IMR-90 (cell line): ENCODE measurements at regions of chr1 and their contacts with region 1.

Region 1: GRCh38 chr1:192086644-192087043 is 71.6 kb upstream of the RGS18 start:
- DNase-seq: no peak
- ATAC-seq: no peak
- H3K4me3 ChIP-seq: no peak overlapping the region
- H3K27ac ChIP-seq: no peak overlapping the region
- H3K4me1 ChIP-seq: 0 out of 2 replicates have a peak, but pooled peaks cover 2% of the 10 kb centered on the region
- H3K27me3 ChIP-seq: no peaks in the 10 kb centered on the region
- CTCF ChIP-seq: no peak
- POLR2A ChIP-seq: no peak
- RAD21 ChIP-seq: no peak

Region 2: GRCh38 chr1:192104869-192105268 is 18.2 kb after region 1 on chr1:
- CTCF ChIA-PET with region 1: no interaction called
- POLR2A ChIA-PET with region 1: interaction called, 17 read pairs
- dilution Hi-C with region 1: no loop called
- in situ Hi-C with region 1: no loop called
- intact Hi-C with region 1: no loop called
- DNase-seq: peak; percentile 89
- ATAC-seq: peak; percentile 90
- H3K4me3 ChIP-seq: no peak overlapping the region
- H3K27ac ChIP-seq: peak overlapping the region; percentile 86
- H3K4me1 ChIP-seq: peaks cover 5% of the 10 kb centered on the region
- H3K27me3 ChIP-seq: no peaks in the 10 kb centered on the region
- CTCF ChIP-seq: no peak
- POLR2A ChIP-seq: no peak; the same call in 1 of the 2 replicates
- RAD21 ChIP-seq: 0 out of 2 replicates have a peak, but pooled peaks have one; percentile 7